ENCODE measurements at regions of chr9 and their contacts with region 1.

Region 1: GRCh38 chr9:131393622-131394463 is at the start of gene PRRC2B:
- DNase-seq: peak; percentile 73
- H3K4me3 Mint-ChIP-seq: peak within 1 kb of the TSS; percentile 81
- H3K27ac Mint-ChIP-seq: peak within 1 kb of the TSS; percentile 90
- H3K4me1 Mint-ChIP-seq: peaks cover 44% of the 10 kb centered on the region
- H3K27me3 Mint-ChIP-seq: peaks cover 4% of the 10 kb centered on the region
- total RNA-seq, gene PRRC2B: 150 and 174 TPM in 2 replicates

Region 2: DNA sequence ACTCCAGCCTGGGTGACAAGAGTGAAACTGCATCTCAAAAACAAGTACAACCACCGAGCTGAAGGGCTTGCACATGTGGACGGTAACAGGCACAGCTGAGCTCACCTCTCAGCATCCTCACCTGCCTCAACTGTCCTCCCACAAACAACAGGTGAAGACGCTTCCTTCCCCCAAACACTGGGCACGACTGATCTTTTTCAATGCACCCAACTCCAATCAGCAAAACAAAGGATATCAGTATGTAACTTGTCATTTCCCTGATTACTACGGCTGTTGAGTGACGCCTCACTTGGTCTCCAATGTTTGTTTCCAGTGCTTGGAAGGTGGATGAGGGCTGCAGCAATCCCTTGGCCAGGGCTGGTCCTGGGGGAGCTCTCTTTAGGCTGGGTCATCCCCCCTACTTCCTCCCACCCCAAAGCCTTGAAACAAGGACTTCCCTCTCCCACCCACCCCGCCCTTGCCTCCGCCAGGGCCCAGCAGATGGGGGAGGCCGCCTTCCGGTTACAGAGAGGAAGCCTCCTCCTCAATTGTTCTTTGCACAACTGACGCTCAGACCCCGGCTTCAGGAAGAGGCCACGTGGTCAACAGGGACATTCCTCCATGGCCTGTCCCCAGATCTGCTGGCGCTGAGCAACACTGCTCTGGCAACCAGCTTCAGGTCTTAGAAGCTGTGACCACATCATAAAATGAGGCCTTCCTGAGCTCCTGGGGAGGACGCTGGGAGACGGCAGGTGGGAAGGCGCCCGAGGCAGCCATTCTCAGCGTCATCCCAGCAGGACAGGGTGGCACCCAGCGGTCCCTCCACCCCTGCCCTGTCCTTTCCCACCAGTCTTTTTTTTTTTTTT is 123.5 kb before region 1 on chr9:
- intact Hi-C with region 1: loop called (anchors 5 kb)
- DNase-seq: peak; percentile 45
- H3K4me3 Mint-ChIP-seq: peak overlapping the region; percentile 100
- H3K27ac Mint-ChIP-seq: peak overlapping the region; percentile 97
- H3K4me1 Mint-ChIP-seq: peaks cover 58% of the 10 kb centered on the region
- H3K27me3 Mint-ChIP-seq: no peaks in the 10 kb centered on the region

Region 3: DNA sequence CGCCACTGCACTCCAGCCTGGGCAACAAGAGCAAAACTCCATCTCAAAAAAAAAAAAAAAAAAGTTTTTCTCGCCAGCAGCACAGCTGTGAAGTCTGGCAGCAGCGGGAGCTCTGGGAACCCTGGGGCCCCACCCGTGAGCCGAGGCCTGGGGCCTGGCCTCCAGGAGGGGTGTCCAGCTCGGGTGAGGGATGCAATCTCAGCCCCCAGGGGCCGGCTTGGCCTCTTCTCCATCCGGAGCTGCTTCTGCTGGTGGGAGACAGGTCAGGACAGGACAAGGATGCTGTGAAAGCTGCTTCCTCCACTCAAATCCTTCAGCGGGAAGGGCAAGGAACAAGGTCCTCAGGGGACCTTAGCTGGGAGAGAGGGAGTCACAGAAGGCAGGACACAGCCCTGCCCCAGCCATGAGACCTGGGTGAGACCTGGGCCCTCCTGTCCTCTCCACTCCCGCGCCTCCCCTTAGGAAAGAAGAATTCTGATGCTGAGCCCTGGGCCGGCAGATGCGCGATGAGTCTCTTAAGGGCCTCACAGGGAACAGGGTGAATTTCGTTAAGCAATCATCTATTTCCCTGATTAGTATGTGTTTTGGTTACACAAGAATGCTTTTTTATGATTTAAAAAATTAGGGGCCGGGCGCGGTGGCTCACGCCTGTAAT is 73.7 kb before region 1 on chr9:
- intact Hi-C with region 1: no loop called
- DNase-seq: no peak
- H3K4me3 Mint-ChIP-seq: no peak overlapping the region
- H3K27ac Mint-ChIP-seq: no peak overlapping the region
- H3K4me1 Mint-ChIP-seq: no peaks in the 10 kb centered on the region
- H3K27me3 Mint-ChIP-seq: no peaks in the 10 kb centered on the region

Region 4: GRCh38 chr9:131370638-131371037 is 23.2 kb before region 1 on chr9:
- intact Hi-C with region 1: loop called (anchors 1 kb)
- DNase-seq: no peak
- H3K4me3 Mint-ChIP-seq: no peak overlapping the region
- H3K27ac Mint-ChIP-seq: no peak overlapping the region
- H3K4me1 Mint-ChIP-seq: peaks cover 15% of the 10 kb centered on the region
- H3K27me3 Mint-ChIP-seq: no peaks in the 10 kb centered on the region

Region 5: DNA sequence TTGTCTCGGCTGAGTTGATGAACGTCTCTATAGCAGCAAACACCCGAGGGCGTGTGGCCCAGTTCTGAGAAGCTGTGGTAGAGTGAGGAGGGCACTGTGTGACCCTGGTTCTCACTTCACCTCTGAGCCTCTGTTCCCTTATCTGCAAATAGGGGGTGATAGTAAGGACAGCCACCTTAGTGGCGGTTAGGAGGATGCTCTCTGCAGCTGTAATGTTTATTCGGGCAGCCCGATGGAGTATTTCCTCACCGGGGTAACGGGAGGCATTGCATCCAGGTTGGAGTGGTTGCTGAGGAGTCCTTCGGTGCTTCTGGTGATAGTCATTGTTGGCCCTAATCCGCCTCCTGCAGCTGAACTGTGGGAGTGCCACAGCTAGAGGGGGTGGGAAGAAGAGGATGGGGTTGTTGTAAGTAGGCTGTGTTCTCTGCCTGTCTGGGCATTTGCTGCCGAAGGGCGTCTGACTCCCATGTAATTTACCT is 13.9 kb after region 1 on chr9:
- intact Hi-C with region 1: loop called (anchors 1 kb)
- DNase-seq: no peak
- H3K4me3 Mint-ChIP-seq: peak overlapping the region; percentile 70
- H3K27ac Mint-ChIP-seq: peak overlapping the region; percentile 77
- H3K4me1 Mint-ChIP-seq: peaks cover 77% of the 10 kb centered on the region
- H3K27me3 Mint-ChIP-seq: no peaks in the 10 kb centered on the region

Region 6: GRCh38 chr9:131418143-131419028 is 24.5 kb after region 1 on chr9:
- intact Hi-C with region 1: loop called (anchors 2 kb)
- DNase-seq: no peak
- H3K4me3 Mint-ChIP-seq: peak overlapping the region; percentile 74
- H3K27ac Mint-ChIP-seq: peak overlapping the region; percentile 84
- H3K4me1 Mint-ChIP-seq: peaks cover 77% of the 10 kb centered on the region
- H3K27me3 Mint-ChIP-seq: no peaks in the 10 kb centered on the region

Region 7: GRCh38 chr9:131502781-131503625 is 109.2 kb after region 1 on chr9 and contains the start of gene POMT1:
- intact Hi-C with region 1: loop called (anchors 2 kb)
- DNase-seq: peak; percentile 87
- H3K4me3 Mint-ChIP-seq: peak within 1 kb of the TSS; percentile 97
- H3K27ac Mint-ChIP-seq: peak within 1 kb of the TSS; percentile 91
- H3K4me1 Mint-ChIP-seq: peaks cover 35% of the 10 kb centered on the region
- H3K27me3 Mint-ChIP-seq: no peaks in the 10 kb centered on the region
- total RNA-seq, gene POMT1: 44.5 and 46.9 TPM in 2 replicates

Region 8: DNA sequence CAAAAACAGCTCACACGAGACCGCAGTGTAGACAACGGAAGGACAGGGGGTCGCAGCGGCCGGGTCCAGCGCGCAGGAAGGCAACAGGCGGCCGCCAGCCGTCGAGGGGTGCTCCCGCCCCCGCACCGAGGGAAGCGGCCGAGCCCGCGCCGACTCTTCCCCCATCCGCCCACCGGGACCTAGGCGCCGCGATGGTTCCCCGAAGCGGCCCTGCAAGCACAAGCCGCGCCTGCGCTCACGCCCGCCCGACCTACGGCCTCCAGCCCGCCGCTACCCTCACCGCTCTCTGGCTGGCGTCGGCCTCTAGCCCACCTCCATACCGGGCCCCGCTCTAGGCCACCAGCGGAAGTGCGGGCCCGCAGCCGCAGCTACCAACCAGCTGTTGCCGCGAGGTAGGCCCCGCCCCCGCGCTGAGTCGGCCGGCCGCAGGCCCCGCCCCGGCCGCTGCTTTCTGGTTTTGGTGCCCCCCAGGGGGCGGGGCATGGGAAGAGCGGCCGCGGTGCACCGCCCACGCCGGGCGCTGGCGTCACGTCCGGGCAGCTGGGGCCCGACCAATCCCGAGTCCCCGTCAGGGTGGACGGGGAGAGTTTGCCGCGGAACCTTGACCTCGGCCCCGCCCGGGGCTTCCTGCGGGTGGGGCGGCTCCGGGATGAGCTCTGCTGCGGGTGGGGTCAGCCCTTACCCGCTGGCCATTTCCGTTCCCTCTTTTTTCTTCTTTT is 961.0 kb after region 1 on chr9 and contains the start of gene SETX:
- intact Hi-C with region 1: loop called (anchors 10 kb)
- DNase-seq: peak; percentile 89
- H3K4me3 Mint-ChIP-seq: peak within 1 kb of the TSS; percentile 91
- H3K27ac Mint-ChIP-seq: peak within 1 kb of the TSS; percentile 93
- H3K4me1 Mint-ChIP-seq: peaks cover 37% of the 10 kb centered on the region
- H3K27me3 Mint-ChIP-seq: no peaks in the 10 kb centered on the region
- total RNA-seq, gene SETX: 49.8 and 51.0 TPM in 2 replicates

Measured in activated T-helper 2 cell treated with anti-CD3 and anti-CD28 coated beads, Interferon-gamma antibody, Interleukin-2, Interleukin-4, amounts not matched to agents 10 μg/mL and 5 μg/mL and 100 μg/mL, durations not matched to agents 14 hours and 24 hours and 36 hours (primary cell).